AG04450 (cell line): ENCODE measurements at regions of chr17 and their contacts with region 1.

Region 1: GRCh38 chr17:15171167-15172047 is 93.7 kb downstream of the PMP22 start:
- DNase-seq: peak; percentile 55
- H3K4me3 ChIP-seq: no peak overlapping the region
- H3K27ac ChIP-seq: no peak overlapping the region
- H3K27me3 ChIP-seq: peaks cover 1% of the 10 kb centered on the region
- CTCF ChIP-seq: peak; percentile 96

Region 2: GRCh38 chr17:13678841-13679240 is 1492.6 kb before region 1 on chr17:
- CTCF ChIA-PET with region 1: interaction called, 10 read pairs
- POLR2A ChIA-PET with region 1: no interaction called
- DNase-seq: no peak
- H3K4me3 ChIP-seq: no peak overlapping the region
- H3K27ac ChIP-seq: no peak overlapping the region
- H3K27me3 ChIP-seq: no peaks in the 10 kb centered on the region
- CTCF ChIP-seq: no peak

Region 3: GRCh38 chr17:14986127-14986526 is 185.3 kb before region 1 on chr17:
- CTCF ChIA-PET with region 1: no interaction called
- POLR2A ChIA-PET with region 1: no interaction called
- DNase-seq: no peak
- H3K4me3 ChIP-seq: no peak overlapping the region
- H3K27ac ChIP-seq: no peak overlapping the region
- H3K27me3 ChIP-seq: peaks cover 5% of the 10 kb centered on the region
- CTCF ChIP-seq: no peak

Region 4: DNA sequence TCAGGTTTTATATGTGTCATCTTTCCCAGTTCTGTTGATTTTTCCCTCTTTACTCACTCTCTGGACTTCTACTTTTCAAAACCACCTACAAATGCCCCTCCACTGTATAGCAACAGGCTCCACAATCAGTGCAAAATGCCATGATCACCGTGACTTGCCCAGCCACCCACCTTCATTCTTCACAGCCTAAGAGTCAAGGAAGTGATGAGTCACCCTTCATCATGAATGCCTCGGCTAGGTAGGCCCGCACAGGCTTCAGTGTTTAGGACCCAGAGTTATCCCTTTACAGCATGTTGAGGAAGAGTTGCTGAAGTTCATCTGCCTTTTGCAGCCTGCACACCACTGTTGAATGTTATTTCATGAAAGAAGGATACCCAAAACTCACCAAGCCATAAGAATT is 64.9 kb before region 1 on chr17:
- CTCF ChIA-PET with region 1: no interaction called
- POLR2A ChIA-PET with region 1: no interaction called
- DNase-seq: no peak
- H3K4me3 ChIP-seq: no peak overlapping the region
- H3K27ac ChIP-seq: no peak overlapping the region
- H3K27me3 ChIP-seq: peaks cover 2% of the 10 kb centered on the region
- CTCF ChIP-seq: no peak

Region 5: DNA sequence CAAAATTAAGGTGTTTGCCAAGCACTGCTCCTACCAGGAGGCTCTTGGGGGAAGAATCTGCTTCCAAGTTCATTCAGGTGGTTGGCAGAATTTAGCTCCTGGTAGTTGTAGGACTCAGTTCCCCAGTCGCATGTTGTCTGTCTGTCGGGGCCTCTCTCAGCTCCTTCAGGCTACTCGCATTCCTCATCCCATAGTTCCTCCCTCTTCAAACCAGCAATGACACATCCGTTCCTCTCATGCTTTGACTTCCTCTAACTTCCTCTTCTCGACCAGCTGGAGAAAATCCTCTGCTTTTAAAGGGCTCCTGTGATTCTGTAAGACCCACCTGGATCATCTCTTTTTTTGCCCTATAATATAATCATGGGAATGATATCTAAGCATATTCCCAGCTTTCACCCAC is 14.4 kb before region 1 on chr17:
- CTCF ChIA-PET with region 1: interaction called, 30 read pairs
- POLR2A ChIA-PET with region 1: interaction called, 4 read pairs
- DNase-seq: no peak
- H3K4me3 ChIP-seq: no peak overlapping the region
- H3K27ac ChIP-seq: no peak overlapping the region
- H3K27me3 ChIP-seq: no peaks in the 10 kb centered on the region
- CTCF ChIP-seq: no peak

Region 6: DNA sequence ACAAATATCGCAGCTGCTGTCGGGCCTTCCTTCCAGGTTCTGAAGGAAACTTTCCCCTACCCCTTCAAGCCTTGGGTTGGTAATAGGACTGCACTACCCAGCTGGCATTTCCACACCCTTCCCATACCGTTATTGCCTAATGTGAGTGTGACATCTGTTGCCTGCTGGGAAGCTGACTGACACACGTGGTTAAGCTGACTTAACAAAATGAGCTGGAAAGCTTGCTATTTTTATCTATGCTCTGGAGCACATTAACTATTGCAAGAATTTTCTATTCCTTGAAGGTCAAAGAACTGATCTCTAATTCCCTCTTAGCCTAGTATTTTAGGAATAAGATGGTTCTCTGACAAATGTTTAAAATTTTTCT is 14.2 kb after region 1 on chr17:
- CTCF ChIA-PET with region 1: interaction called, 13 read pairs
- POLR2A ChIA-PET with region 1: no interaction called
- DNase-seq: no peak
- H3K4me3 ChIP-seq: no peak overlapping the region
- H3K27ac ChIP-seq: no peak overlapping the region
- H3K27me3 ChIP-seq: peaks cover 16% of the 10 kb centered on the region
- CTCF ChIP-seq: no peak

Region 7: GRCh38 chr17:15213381-15214087 is 42.1 kb after region 1 on chr17:
- CTCF ChIA-PET with region 1: no interaction called
- POLR2A ChIA-PET with region 1: no interaction called
- DNase-seq: no peak
- H3K4me3 ChIP-seq: no peak overlapping the region
- H3K27ac ChIP-seq: no peak overlapping the region
- H3K27me3 ChIP-seq: peaks cover 3% of the 10 kb centered on the region
- CTCF ChIP-seq: peak; percentile 39